ENCODE measurements at regions of chr4 and their contacts with region 1.

Region 1: GRCh38 chr4:48141048-48141447 is 7.0 kb upstream of the TXK start:
- DNase-seq: peak; percentile 48
- H3K4me3 Mint-ChIP-seq: no peak overlapping the region
- H3K27ac Mint-ChIP-seq: no peak overlapping the region
- H3K4me1 Mint-ChIP-seq: peaks cover 6% of the 10 kb centered on the region
- H3K27me3 Mint-ChIP-seq: no peaks in the 10 kb centered on the region
- CTCF ChIP-seq: peak; percentile 43

Region 2: GRCh38 chr4:48008021-48008596 is 132.9 kb before region 1 on chr4:
- CTCF ChIA-PET with region 1: interaction called, 5 read pairs
- POLR2A ChIA-PET with region 1: no interaction called
- intact Hi-C with region 1: loop called (anchors 1 kb)
- DNase-seq: peak; percentile 37
- H3K4me3 Mint-ChIP-seq: no peak overlapping the region
- H3K27ac Mint-ChIP-seq: no peak overlapping the region
- H3K4me1 Mint-ChIP-seq: no peaks in the 10 kb centered on the region
- H3K27me3 Mint-ChIP-seq: no peaks in the 10 kb centered on the region
- CTCF ChIP-seq: no peak

Region 3: GRCh38 chr4:48122756-48123155 is 18.3 kb before region 1 on chr4:
- CTCF ChIA-PET with region 1: interaction called, 35 read pairs
- POLR2A ChIA-PET with region 1: no interaction called
- intact Hi-C with region 1: no loop called
- DNase-seq: peak; percentile 3
- H3K4me3 Mint-ChIP-seq: no peak overlapping the region
- H3K27ac Mint-ChIP-seq: no peak overlapping the region
- H3K4me1 Mint-ChIP-seq: no peaks in the 10 kb centered on the region
- H3K27me3 Mint-ChIP-seq: no peaks in the 10 kb centered on the region
- CTCF ChIP-seq: no peak

Region 4: GRCh38 chr4:48370260-48371134 is 229.4 kb after region 1 on chr4:
- CTCF ChIA-PET with region 1: no interaction called
- POLR2A ChIA-PET with region 1: no interaction called
- intact Hi-C with region 1: no loop called
- DNase-seq: no peak
- H3K4me3 Mint-ChIP-seq: no peak overlapping the region
- H3K27ac Mint-ChIP-seq: no peak overlapping the region
- H3K4me1 Mint-ChIP-seq: peaks cover 42% of the 10 kb centered on the region
- H3K27me3 Mint-ChIP-seq: no peaks in the 10 kb centered on the region
- CTCF ChIP-seq: no peak